PC-9 (cell line): ENCODE measurements at regions of chr16 and their contacts with region 1.

Region 1: GRCh38 chr16:11557801-11558200 is 28.9 kb downstream of the LITAF start:
- DNase-seq: no peak
- H3K4me3 ChIP-seq: no peak overlapping the region
- H3K27ac ChIP-seq: no peak overlapping the region
- H3K4me1 ChIP-seq: no peaks in the 10 kb centered on the region
- H3K27me3 ChIP-seq: no peaks in the 10 kb centered on the region
- CTCF ChIP-seq: no peak

Region 2: DNA sequence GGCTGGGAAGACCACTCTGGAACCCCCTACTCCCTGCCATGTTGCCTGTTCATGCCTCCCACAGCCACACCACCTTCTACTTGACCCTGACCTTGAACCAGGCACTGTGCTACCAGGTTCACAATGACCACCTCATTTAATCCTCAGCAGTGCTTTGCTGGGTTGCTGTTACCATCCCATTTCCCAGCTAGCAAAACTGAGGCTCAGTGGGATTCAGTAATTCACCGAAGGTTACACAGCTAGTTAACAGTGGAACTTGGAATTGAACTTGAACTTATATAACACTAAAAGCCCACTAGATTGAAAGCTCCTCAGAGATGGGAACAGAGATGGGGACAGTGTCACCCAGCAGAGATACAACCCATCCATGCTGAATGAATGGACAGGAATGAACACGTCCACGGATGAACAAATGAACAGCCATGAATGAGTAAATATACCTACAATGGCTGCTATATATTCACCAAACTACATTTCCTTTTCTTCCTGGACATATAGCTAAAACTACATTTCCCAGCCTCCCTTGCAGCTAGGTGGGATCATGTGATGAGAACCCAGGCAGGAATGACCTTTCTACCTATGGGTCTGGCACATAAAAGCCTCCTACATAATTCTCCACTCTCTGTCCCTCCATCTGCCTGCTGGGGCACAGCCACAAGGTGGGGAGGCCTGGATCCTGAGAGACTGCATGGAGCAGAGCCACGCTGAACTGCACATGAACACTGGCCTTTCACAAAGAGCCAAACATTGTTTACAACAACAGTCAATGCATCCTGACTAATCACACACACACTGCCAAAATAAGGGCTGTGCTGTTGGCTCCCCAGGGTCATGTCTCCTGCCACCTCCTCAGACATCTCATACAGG is 117.8 kb before region 1 on chr16:
- CTCF ChIA-PET with region 1: interaction called, 13 read pairs
- POLR2A ChIA-PET with region 1: no interaction called
- intact Hi-C with region 1: no loop called
- DNase-seq: no peak
- H3K4me3 ChIP-seq: no peak overlapping the region
- H3K27ac ChIP-seq: no peak overlapping the region
- H3K4me1 ChIP-seq: no peaks in the 10 kb centered on the region
- H3K27me3 ChIP-seq: peaks cover 4% of the 10 kb centered on the region; the same call in 1 of the 2 replicates
- CTCF ChIP-seq: no peak

Region 3: GRCh38 chr16:11689031-11689761 is 131.4 kb after region 1 on chr16:
- CTCF ChIA-PET with region 1: no interaction called
- POLR2A ChIA-PET with region 1: interaction called, 12 read pairs
- intact Hi-C with region 1: no loop called
- DNase-seq: no peak
- H3K4me3 ChIP-seq: no peak overlapping the region
- H3K27ac ChIP-seq: no peak overlapping the region
- H3K4me1 ChIP-seq: peaks cover 11% of the 10 kb centered on the region
- H3K27me3 ChIP-seq: no peaks in the 10 kb centered on the region
- CTCF ChIP-seq: no peak

Region 4: GRCh38 chr16:11833951-11834695 is 276.3 kb after region 1 on chr16:
- CTCF ChIA-PET with region 1: no interaction called
- POLR2A ChIA-PET with region 1: no interaction called
- intact Hi-C with region 1: no loop called
- DNase-seq: peak in 1 of 2 experiments; percentile 59
- H3K4me3 ChIP-seq: no peak overlapping the region
- H3K27ac ChIP-seq: peak overlapping the region; percentile 49
- H3K4me1 ChIP-seq: 0 out of 2 replicates have a peak, but pooled peaks cover 8% of the 10 kb centered on the region
- H3K27me3 ChIP-seq: no peaks in the 10 kb centered on the region
- CTCF ChIP-seq: no peak